MCF 10A (cell line): ENCODE measurements at regions of chr10 and their contacts with region 1.

Region 1: GRCh38 chr10:24465891-24466818 is 257.2 kb downstream of the KIAA1217 start:
- DNase-seq: peak; percentile 95
- H3K4me3 Mint-ChIP-seq: peak overlapping the region; percentile 76
- H3K27ac Mint-ChIP-seq: peak overlapping the region; percentile 90
- H3K4me1 Mint-ChIP-seq: peaks cover 48% of the 10 kb centered on the region
- H3K27me3 Mint-ChIP-seq: no peaks in the 10 kb centered on the region
- CTCF ChIP-seq: no peak

Region 2: GRCh38 chr10:24344279-24344678 is 121.9 kb before region 1 on chr10:
- CTCF ChIA-PET with region 1: no interaction called
- POLR2A ChIA-PET with region 1: interaction called, 10 read pairs
- intact Hi-C with region 1: no loop called
- DNase-seq: peak; percentile 91
- H3K4me3 Mint-ChIP-seq: peak overlapping the region; percentile 52
- H3K27ac Mint-ChIP-seq: peak overlapping the region; percentile 90
- H3K4me1 Mint-ChIP-seq: peaks cover 45% of the 10 kb centered on the region
- H3K27me3 Mint-ChIP-seq: no peaks in the 10 kb centered on the region
- CTCF ChIP-seq: no peak

Region 3: GRCh38 chr10:24383681-24384106 is 82.5 kb before region 1 on chr10:
- CTCF ChIA-PET with region 1: interaction called, 3 read pairs
- POLR2A ChIA-PET with region 1: interaction called, 69 read pairs
- intact Hi-C with region 1: loop called (anchors 1 kb)
- DNase-seq: peak; percentile 98
- H3K4me3 Mint-ChIP-seq: peak overlapping the region; percentile 63
- H3K27ac Mint-ChIP-seq: peak overlapping the region; percentile 65
- H3K4me1 Mint-ChIP-seq: peaks cover 25% of the 10 kb centered on the region
- H3K27me3 Mint-ChIP-seq: no peaks in the 10 kb centered on the region
- CTCF ChIP-seq: peak; percentile 55

Region 4: GRCh38 chr10:24415455-24416125 is 50.6 kb before region 1 on chr10:
- CTCF ChIA-PET with region 1: interaction called, 5 read pairs
- POLR2A ChIA-PET with region 1: interaction called, 90 read pairs
- intact Hi-C with region 1: no loop called
- DNase-seq: peak; percentile 67
- H3K4me3 Mint-ChIP-seq: peak overlapping the region; percentile 25
- H3K27ac Mint-ChIP-seq: peak overlapping the region; percentile 96
- H3K4me1 Mint-ChIP-seq: peaks cover 23% of the 10 kb centered on the region
- H3K27me3 Mint-ChIP-seq: no peaks in the 10 kb centered on the region
- CTCF ChIP-seq: no peak

Region 5: GRCh38 chr10:24435374-24435773 is 30.8 kb before region 1 on chr10:
- CTCF ChIA-PET with region 1: no interaction called
- POLR2A ChIA-PET with region 1: interaction called, 62 read pairs
- intact Hi-C with region 1: no loop called
- DNase-seq: peak; percentile 56
- H3K4me3 Mint-ChIP-seq: no peak overlapping the region
- H3K27ac Mint-ChIP-seq: peak overlapping the region; percentile 36
- H3K4me1 Mint-ChIP-seq: peaks cover 11% of the 10 kb centered on the region
- H3K27me3 Mint-ChIP-seq: no peaks in the 10 kb centered on the region
- CTCF ChIP-seq: no peak

Region 6: GRCh38 chr10:24483489-24484100 is 17.4 kb after region 1 on chr10:
- CTCF ChIA-PET with region 1: interaction called, 4 read pairs
- POLR2A ChIA-PET with region 1: interaction called, 230 read pairs
- intact Hi-C with region 1: loop called (anchors 1 kb)
- DNase-seq: peak; percentile 98
- H3K4me3 Mint-ChIP-seq: peak overlapping the region; percentile 55
- H3K27ac Mint-ChIP-seq: peak overlapping the region; percentile 98
- H3K4me1 Mint-ChIP-seq: peaks cover 32% of the 10 kb centered on the region
- H3K27me3 Mint-ChIP-seq: no peaks in the 10 kb centered on the region
- CTCF ChIP-seq: no peak

Region 7: GRCh38 chr10:24503461-24504320 is 37.5 kb after region 1 on chr10:
- CTCF ChIA-PET with region 1: interaction called, 5 read pairs
- POLR2A ChIA-PET with region 1: interaction called, 20 read pairs
- intact Hi-C with region 1: loop called (anchors 1 kb)
- DNase-seq: peak; percentile 81
- H3K4me3 Mint-ChIP-seq: no peak overlapping the region
- H3K27ac Mint-ChIP-seq: peak overlapping the region; percentile 23
- H3K4me1 Mint-ChIP-seq: no peaks in the 10 kb centered on the region
- H3K27me3 Mint-ChIP-seq: no peaks in the 10 kb centered on the region
- CTCF ChIP-seq: peak; percentile 86

Region 8: GRCh38 chr10:24533981-24534380 is 67.8 kb after region 1 on chr10:
- CTCF ChIA-PET with region 1: no interaction called
- POLR2A ChIA-PET with region 1: no interaction called
- intact Hi-C with region 1: no loop called
- DNase-seq: no peak
- H3K4me3 Mint-ChIP-seq: no peak overlapping the region
- H3K27ac Mint-ChIP-seq: no peak overlapping the region
- H3K4me1 Mint-ChIP-seq: no peaks in the 10 kb centered on the region
- H3K27me3 Mint-ChIP-seq: no peaks in the 10 kb centered on the region
- CTCF ChIP-seq: no peak